Activated T-helper 1 cell treated with anti-CD3 and anti-CD28 coated beads, Interleukin-12 subunit alpha, Interleukin-12 subunit beta, Interleukin-2, Interleukin-4 antibody, amounts not matched to agents 30 ng/mL and 10 ng/mL and 1 ng/mL, durations not matched to agents 14 hours and 24 hours and 36 hours (primary cell): ENCODE measurements at regions of chr1 and their contacts with region 1.

Region 1: DNA sequence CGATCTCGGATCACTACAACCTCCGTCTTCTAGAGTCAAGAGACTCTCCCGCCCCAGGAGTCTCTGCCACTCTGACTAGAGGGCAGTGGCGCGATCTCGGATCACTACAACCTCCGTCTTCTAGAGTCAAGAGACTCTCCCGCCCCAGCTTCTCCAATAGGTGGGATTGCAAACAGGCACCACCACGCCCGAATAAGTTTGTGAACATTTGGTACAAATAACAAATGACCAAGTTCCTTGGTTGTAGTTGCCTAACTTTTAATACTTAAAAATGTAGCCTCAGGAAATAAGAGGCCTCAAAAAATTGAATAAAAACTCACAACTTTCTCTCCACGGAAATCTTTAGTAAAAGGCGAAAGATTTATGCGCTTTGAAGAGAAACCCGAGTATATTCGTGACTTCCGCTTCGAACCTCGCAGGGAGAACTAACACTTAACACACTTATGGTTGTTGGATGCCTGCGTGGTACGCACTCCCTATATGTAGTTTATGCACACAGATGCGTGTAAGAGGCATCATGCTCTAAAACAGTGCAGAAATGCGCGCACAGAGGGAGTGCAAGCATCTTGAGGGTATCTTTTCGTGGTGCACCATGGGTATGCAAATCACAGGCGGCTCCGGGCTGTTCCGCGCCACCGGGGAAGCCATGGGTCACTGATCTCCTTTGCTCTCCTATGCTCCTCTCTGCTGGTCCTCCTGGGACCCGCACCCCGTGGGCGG is 11.4 kb downstream of the BTBD19 start:
- DNase-seq: peak; percentile 81
- H3K4me3 Mint-ChIP-seq: peak overlapping the region; percentile 87
- H3K27ac Mint-ChIP-seq: peak overlapping the region; percentile 97
- H3K4me1 Mint-ChIP-seq: peaks cover 54% of the 10 kb centered on the region
- H3K27me3 Mint-ChIP-seq: no peaks in the 10 kb centered on the region

Region 2: GRCh38 chr1:44721485-44722361 is 98.0 kb before region 1 on chr1:
- intact Hi-C with region 1: loop called (anchors 1 kb)
- DNase-seq: peak; percentile 75
- H3K4me3 Mint-ChIP-seq: peak overlapping the region; percentile 77
- H3K27ac Mint-ChIP-seq: peak overlapping the region; percentile 97
- H3K4me1 Mint-ChIP-seq: peaks cover 71% of the 10 kb centered on the region
- H3K27me3 Mint-ChIP-seq: no peaks in the 10 kb centered on the region

Region 3: DNA sequence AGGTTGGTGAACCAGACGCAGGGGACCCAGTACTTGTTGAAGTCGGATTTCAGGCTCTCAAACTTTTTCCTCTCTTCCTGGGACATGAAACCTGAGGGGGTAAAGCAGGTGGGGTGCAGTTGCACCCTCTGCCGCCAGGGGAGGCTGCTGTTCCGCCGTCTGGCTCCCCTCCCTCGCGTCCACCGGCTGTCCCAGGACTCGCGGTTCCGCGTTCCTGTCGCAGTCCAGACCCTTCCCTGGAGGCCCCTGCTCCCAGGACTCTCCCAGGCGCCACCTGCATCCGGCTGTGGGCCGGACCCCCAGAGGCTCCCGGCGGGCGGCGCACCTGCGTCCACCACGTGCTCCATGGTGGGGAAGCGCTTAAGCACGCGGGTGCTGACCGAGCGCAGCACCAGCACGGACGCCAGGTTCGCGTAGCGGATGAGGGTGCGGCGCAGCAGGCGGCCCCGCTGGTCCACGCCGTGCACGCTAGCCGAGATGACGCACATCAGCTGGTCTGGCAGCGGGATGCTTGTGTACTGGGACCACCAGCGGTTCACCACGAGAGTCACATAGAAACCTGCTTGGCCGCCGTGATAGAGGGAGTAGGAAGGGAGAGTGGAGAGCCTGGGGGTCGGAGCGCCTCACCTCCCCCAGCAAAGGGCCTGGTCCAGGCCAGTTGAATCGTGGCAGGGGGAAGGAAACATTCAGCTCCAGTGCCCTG is 33.5 kb before region 1 on chr1:
- intact Hi-C with region 1: loop called (anchors 1 kb)
- DNase-seq: peak; percentile 66
- H3K4me3 Mint-ChIP-seq: peak overlapping the region; percentile 80
- H3K27ac Mint-ChIP-seq: peak overlapping the region; percentile 66
- H3K4me1 Mint-ChIP-seq: peaks cover 37% of the 10 kb centered on the region
- H3K27me3 Mint-ChIP-seq: no peaks in the 10 kb centered on the region

Region 4: GRCh38 chr1:44799770-44800584 is 19.8 kb before region 1 on chr1 and contains the start of gene PLK3:
- intact Hi-C with region 1: loop called (anchors 1 kb)
- DNase-seq: peak; percentile 97
- H3K4me3 Mint-ChIP-seq: peak within 1 kb of the TSS; percentile 97
- H3K27ac Mint-ChIP-seq: peak within 1 kb of the TSS; percentile 99
- H3K4me1 Mint-ChIP-seq: peaks cover 35% of the 10 kb centered on the region
- H3K27me3 Mint-ChIP-seq: no peaks in the 10 kb centered on the region
- total RNA-seq, gene PLK3: 208 and 211 TPM in 2 replicates

Region 5: DNA sequence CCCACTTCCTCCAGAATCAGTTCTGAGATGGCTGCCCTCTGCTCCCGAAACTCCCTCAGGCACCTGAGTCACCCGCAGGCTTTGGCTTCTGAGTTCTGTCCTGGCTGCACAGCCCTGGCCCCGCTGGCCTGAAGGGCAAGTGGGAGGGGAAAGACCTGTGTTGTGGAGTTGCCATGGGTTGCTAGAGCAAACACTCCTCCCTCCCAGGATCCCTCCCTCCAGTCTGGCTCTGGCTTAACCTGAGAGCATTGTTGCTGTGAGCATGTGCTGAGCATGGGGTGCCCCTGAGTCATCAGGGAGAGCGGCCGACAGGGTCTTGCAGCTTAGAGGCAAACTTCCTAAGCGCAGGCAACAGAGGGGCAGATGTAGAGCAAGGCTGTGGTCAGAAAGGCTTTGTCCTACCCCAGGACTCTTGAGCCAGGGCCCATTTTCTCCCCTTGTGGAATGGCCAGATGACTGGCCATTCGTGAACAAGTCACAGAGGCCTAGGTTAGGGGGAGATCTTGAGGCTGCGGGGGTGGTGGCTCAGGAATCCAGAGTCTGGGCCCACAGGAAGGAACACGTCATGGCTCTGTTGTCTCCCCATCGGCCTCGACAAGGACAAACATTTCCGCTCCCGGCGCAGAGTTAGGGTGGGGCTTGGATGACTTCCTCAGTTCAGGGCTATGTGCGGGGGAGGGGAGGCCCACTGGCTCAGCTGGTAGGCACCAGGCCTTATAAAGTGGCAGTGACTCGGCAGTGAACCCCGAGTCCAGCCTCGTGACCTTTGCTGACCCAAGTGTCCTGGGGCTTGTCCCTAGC is 12.3 kb before region 1 on chr1 and contains the start of gene DYNLT4:
- intact Hi-C with region 1: loop called (anchors 1 kb)
- DNase-seq: peak; percentile 84
- H3K4me3 Mint-ChIP-seq: peak within 1 kb of the TSS; percentile 68
- H3K27ac Mint-ChIP-seq: peak within 1 kb of the TSS; percentile 99
- H3K4me1 Mint-ChIP-seq: peaks cover 88% of the 10 kb centered on the region
- H3K27me3 Mint-ChIP-seq: no peaks in the 10 kb centered on the region
- total RNA-seq, gene DYNLT4: 0.44 TPM in 1 of 2 replicates, not detected in the other

Region 6: DNA sequence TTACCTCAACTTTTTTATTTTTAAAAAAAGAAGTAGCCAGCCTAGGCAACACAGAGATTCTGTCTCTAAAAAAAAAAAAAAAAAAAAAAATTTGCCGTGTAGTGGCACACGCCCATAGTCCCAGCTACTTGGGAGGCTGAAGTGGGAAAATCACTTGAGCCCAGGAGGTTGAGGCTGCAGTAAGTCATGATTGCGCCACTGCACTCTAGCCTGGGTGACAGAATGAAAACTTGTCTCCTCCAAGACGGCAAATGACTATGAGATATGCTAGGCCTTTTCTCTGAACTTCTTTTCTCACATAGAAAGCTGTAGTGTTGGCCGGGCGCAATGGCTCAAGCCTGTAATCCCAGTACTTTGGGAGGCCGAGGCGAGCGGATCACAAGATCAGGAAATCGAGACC is 48.0 kb after region 1 on chr1:
- intact Hi-C with region 1: no loop called
- DNase-seq: no peak
- H3K4me3 Mint-ChIP-seq: no peak overlapping the region
- H3K27ac Mint-ChIP-seq: no peak overlapping the region
- H3K4me1 Mint-ChIP-seq: no peaks in the 10 kb centered on the region
- H3K27me3 Mint-ChIP-seq: no peaks in the 10 kb centered on the region

Region 7: DNA sequence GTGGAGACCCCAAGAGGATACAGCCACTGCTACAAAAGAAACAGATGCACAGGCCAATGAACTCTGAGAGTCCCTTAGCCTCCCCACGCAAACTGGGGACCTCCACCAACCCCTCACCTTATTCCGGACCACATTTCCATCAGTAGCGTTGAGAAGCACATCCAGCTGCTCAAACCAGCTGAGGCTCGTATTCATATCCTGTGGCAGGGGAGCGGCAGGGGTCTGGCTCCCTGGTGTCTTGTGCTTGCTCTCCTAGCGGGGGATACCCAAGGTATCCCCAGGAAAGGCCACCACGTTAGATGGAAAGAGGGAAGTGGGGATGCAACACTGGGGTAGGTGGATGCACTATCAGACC is 679.6 kb after region 1 on chr1:
- intact Hi-C with region 1: loop called (anchors 1 kb)
- DNase-seq: no peak
- H3K4me3 Mint-ChIP-seq: peak overlapping the region; percentile 93
- H3K27ac Mint-ChIP-seq: peak overlapping the region; percentile 83
- H3K4me1 Mint-ChIP-seq: peaks cover 37% of the 10 kb centered on the region
- H3K27me3 Mint-ChIP-seq: no peaks in the 10 kb centered on the region